Activated CD4-positive, alpha-beta T cell treated with anti-CD3 and anti-CD28 coated beads for 36 hours (primary cell): ENCODE measurements at regions of chr15 and their contacts with region 1.

Region 1: GRCh38 chr15:39624806-39625205 is 43.9 kb downstream of the THBS1 start:
- DNase-seq: peak; percentile 68
- ATAC-seq: peak; percentile 69
- H3K4me3 Mint-ChIP-seq: peak overlapping the region; percentile 18
- H3K27ac Mint-ChIP-seq: peak overlapping the region; percentile 93
- H3K4me1 Mint-ChIP-seq: peaks cover 66% of the 10 kb centered on the region
- H3K27me3 Mint-ChIP-seq: peaks cover 2% of the 10 kb centered on the region

Region 2: GRCh38 chr15:39642011-39642640 is 17.3 kb after region 1 on chr15:
- CTCF ChIA-PET with region 1: interaction called, 7 read pairs
- POLR2A ChIA-PET with region 1: interaction called, 4 read pairs
- intact Hi-C with region 1: loop called (anchors 1 to 2 kb)
- DNase-seq: no peak
- ATAC-seq: no peak
- H3K4me3 Mint-ChIP-seq: no peak overlapping the region
- H3K27ac Mint-ChIP-seq: no peak overlapping the region
- H3K4me1 Mint-ChIP-seq: peaks cover 33% of the 10 kb centered on the region
- H3K27me3 Mint-ChIP-seq: peaks cover 7% of the 10 kb centered on the region

Region 3: DNA sequence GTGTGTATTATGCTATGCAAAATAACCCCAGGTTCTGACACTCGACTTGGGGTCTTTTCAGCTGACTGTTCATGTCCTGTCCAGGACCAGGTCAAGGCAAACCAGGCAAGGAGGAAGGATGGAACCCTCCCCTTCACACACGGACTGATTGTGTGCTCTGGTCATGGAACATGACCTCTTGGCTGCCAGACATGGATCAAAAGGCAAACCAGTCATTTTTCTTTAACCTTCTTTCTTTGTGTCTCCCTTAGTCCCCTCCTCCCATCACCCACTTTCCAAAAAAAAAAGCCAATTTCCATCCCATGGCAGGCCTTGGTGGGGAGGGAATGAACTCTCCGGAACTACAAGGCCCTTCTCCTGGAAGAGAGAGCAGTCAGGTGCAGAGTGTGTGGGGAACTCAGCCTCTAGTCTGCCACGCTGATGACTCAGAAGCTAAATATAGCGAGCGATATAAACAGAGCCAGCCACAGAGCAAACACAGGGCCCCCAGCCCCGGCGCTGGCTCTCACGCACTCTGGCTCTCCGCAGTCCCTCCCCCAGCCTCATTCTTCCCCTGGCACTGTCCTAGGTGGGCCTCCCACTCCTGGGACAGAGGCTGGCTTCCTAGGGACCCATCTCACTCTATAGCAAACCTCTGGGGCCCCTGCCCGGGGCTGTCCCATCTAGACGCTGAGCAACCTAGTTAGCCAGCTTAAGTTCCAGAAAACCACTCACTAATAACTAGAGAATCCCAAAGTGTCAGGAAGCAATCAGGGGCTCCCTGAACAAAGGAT is 473.9 kb after region 1 on chr15:
- CTCF ChIA-PET with region 1: no interaction called
- POLR2A ChIA-PET with region 1: no interaction called
- intact Hi-C with region 1: loop called in 1 of 2 experiments (anchors 5 kb)
- DNase-seq: peak; percentile 87
- ATAC-seq: peak; percentile 94
- H3K4me3 Mint-ChIP-seq: peak overlapping the region; percentile 65
- H3K27ac Mint-ChIP-seq: peak overlapping the region; percentile 97
- H3K4me1 Mint-ChIP-seq: peaks cover 81% of the 10 kb centered on the region
- H3K27me3 Mint-ChIP-seq: no peaks in the 10 kb centered on the region